ENCODE measurements at regions of chr7 and their contacts with region 1.

Region 1: DNA sequence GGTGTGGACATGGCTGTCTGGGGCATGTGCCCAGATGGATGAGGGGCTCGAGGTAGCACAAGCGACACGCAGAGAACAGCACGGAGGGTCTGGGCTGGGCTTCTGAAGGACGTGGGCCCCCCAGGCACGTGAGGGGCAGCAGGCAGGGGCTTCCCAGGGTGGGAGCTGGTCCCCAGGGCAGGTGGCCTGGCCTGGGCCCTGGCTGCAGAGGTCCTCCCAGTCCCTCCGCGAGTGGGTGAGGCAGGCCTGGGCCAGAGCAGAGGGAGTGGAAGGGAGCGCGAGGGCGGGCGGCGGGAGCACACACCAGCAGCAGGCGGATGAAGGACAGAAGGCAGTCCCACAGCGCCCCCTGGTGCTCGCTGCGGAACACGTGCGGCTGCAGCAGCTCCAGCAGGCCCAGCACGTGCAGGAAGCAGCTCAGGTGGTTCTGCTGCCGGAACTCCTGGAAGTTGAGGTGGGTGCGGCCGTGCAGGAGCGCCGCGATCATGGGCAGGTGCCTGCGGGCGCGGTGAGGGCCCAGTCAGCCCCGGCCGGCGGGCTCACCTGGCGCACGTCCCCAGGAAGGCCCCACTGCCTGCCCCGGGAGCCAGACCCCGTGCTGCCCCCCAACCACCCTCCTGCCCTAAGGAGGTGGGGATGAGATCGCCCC is 14.7 kb upstream of the MICALL2 start:
- DNase-seq: peak; percentile 91
- ATAC-seq: peak; percentile 89
- H3K4me3 Mint-ChIP-seq: no peak overlapping the region
- H3K27ac Mint-ChIP-seq: no peak overlapping the region
- H3K4me1 Mint-ChIP-seq: peaks cover 11% of the 10 kb centered on the region
- H3K27me3 Mint-ChIP-seq: no peaks in the 10 kb centered on the region

Region 2: DNA sequence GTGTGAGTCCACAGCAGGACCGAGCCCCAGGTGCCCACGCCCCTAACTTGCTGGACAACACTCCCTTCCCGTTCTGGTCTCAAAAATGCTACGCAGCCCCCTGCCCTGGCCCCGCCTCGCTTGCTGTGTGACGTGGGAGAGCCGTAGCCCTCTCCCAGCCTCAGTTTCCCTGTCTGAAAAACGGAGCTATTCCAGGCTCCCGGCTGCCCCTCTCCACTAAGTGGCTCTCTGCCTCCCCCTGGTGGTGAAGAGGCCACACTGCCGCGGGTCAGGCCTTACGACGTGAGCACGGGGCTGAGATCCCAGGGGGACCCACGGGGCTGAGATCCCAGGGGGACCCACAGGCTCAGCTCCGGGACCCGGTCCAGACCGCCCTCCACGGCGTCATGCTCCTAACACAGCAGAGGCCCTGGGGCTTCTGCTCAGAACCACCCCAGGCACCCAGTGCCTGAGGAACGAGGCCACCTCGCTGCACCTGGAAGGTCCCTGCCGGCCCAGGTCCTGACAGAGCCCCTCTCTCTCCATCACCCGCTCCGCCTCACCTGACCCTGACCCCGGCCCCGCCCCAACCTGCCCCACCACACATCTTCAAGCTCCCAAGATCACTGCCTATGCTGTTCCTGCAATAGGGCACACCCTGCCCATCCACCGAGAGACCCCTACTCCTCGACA is 41.4 kb before region 1 on chr7:
- CTCF ChIA-PET with region 1: interaction called, 12 read pairs
- DNase-seq: peak; percentile 83
- ATAC-seq: peak; percentile 84
- H3K4me3 Mint-ChIP-seq: no peak overlapping the region
- H3K27ac Mint-ChIP-seq: no peak overlapping the region
- H3K4me1 Mint-ChIP-seq: peaks cover 2% of the 10 kb centered on the region
- H3K27me3 Mint-ChIP-seq: peaks cover 5% of the 10 kb centered on the region

Region 3: GRCh38 chr7:1454972-1455939 is 18.7 kb before region 1 on chr7:
- CTCF ChIA-PET with region 1: interaction called, 13 read pairs
- DNase-seq: no peak
- ATAC-seq: no peak
- H3K4me3 Mint-ChIP-seq: no peak overlapping the region
- H3K27ac Mint-ChIP-seq: no peak overlapping the region
- H3K4me1 Mint-ChIP-seq: peaks cover 4% of the 10 kb centered on the region
- H3K27me3 Mint-ChIP-seq: peaks cover 8% of the 10 kb centered on the region

Measured in activated CD8-positive, alpha-beta memory T cell treated with anti-CD3 and anti-CD28 coated beads, Interleukin-2, amount 10 ng/mL, durations not matched to agents 7 days and 5 days (primary cell).